Heart left ventricle (tissue), 16 donors: ENCODE measurements at regions of chr17 and their contacts with region 1.

Region 1: DNA sequence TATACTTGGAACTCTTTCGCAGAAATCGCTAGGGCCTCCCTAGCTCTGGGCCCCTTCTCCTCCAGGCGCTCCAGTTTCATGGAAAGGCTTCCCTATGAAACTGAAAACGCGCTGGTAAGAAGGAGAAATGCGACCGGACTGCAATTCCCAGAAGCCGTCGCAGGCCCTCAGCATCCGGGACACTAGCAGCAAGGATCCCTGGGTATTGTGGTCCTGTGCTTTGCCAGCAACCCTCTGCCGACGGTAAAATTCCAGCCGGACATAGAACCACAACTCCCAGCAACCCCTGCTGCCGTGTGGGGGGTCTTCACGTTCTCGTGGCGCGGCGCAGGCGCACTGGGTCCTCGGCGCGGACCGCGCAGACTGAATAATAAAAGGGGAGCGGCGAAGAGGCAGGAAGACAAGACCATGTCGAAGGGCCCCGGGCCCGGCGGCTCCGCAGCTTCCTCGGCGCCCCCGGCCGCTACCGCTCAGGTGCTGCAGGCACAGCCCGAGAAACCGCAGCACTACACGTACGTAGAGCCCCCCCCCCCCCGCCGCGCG is at the start of gene UNK:
- DNase-seq: peak; percentile 97 to 99 (median 98)
- ATAC-seq: peak; percentile 91 to 94 (median 93)
- H3K4me3 ChIP-seq: peak within 1 kb of the TSS; percentile 45 to 89 (median 75)
- H3K27ac ChIP-seq: peak within 1 kb of the TSS; percentile 94 to 100 (median 99)
- H3K4me1 ChIP-seq: peaks cover 4 to 56% (median 36%) of the 10 kb centered on the region in 12 donors
- H3K27me3 ChIP-seq: no peaks in the 10 kb centered on the region
- CTCF ChIP-seq: no peak
- POLR2A ChIP-seq: peak in 1 of 2 donors; percentile 59
- total RNA-seq, gene UNK: 11.3 to 27.5 (median 16.3) TPM

Region 2: GRCh38 chr17:75639771-75640316 is 144.7 kb before region 1 on chr17:
- intact Hi-C with region 1: no loop called
- DNase-seq: peak in 2 of 5 donors; percentile 7 to 25
- ATAC-seq: no peak
- H3K4me3 ChIP-seq: no peak overlapping the region
- H3K27ac ChIP-seq: peak overlapping the region in 5 of 12 donors; percentile 58 to 86 (median 70)
- H3K4me1 ChIP-seq: peaks cover 0 to 79% (median 23%) of the 10 kb centered on the region in 12 donors
- H3K27me3 ChIP-seq: no peaks in the 10 kb centered on the region
- CTCF ChIP-seq: no peak
- POLR2A ChIP-seq: no peak

Region 3: GRCh38 chr17:75737133-75737962 is 47.2 kb before region 1 on chr17:
- intact Hi-C with region 1: no loop called
- DNase-seq: no peak
- ATAC-seq: no peak
- H3K4me3 ChIP-seq: no peak overlapping the region
- H3K27ac ChIP-seq: no peak overlapping the region
- H3K4me1 ChIP-seq: peaks cover 0 to 9% (median 0%) of the 10 kb centered on the region in 12 donors
- H3K27me3 ChIP-seq: no peaks in the 10 kb centered on the region
- CTCF ChIP-seq: no peak
- POLR2A ChIP-seq: no peak

Region 4: DNA sequence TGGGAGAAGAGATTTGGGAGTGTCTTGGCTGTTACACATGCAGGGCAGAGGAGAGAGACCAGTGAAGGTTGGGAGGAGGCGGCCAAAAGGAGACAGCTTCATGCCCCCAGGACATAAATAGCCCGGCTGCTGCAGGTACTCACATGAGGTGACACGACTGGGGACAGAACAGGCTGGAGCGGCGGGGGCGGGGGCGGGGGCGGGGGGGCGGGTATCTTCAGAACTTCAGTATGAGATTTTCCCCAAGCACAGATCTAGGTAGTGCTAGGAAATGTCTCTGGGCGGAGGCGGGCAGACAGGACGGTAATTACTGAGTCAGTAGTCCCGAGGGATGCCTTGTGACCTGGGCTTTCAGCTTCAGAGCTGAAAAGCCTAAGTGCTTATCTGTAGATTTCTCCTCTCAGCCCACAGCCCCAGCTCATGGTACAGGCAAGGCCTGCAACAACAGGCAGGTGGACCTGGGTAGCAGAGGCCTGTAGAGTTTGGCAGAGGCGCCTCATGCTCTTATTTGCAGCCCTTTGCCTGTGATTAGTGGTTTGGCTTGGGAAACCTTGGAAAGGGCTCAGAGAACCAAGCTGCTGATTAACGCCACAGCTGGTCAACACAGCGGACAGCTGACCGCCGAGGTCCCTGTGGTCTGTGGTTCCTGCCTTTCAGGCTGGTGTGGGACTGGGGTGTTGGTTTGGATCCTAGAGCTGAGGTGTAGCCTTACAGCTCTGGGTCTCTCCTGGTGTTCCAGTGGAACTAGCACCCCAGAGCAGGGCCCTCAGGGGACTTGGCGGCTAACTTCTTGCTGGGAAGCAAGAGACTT is 24.6 kb after region 1 on chr17:
- intact Hi-C with region 1: loop called in 1 of 10 experiments (anchors 2 kb)
- DNase-seq: peak in 4 of 5 donors; percentile 74 to 85 (median 79)
- ATAC-seq: peak; percentile 60 to 86 (median 77)
- H3K4me3 ChIP-seq: peak overlapping the region in 5 of 12 donors; percentile 3 to 24 (median 6)
- H3K27ac ChIP-seq: peak overlapping the region; percentile 62 to 93 (median 84)
- H3K4me1 ChIP-seq: peaks cover 8 to 45% (median 32%) of the 10 kb centered on the region in 12 donors
- H3K27me3 ChIP-seq: no peaks in the 10 kb centered on the region
- CTCF ChIP-seq: no peak
- POLR2A ChIP-seq: no peak

Region 5: GRCh38 chr17:75827252-75828115 is 42.9 kb after region 1 on chr17:
- intact Hi-C with region 1: loop called in 3 of 10 experiments (anchors 2 to 5 kb)
- DNase-seq: peak; percentile 69 to 88 (median 79)
- ATAC-seq: peak; percentile 25 to 81 (median 67)
- H3K4me3 ChIP-seq: peak overlapping the region in 10 of 12 donors; percentile 27 to 56 (median 40)
- H3K27ac ChIP-seq: peak overlapping the region; percentile 70 to 90 (median 84)
- H3K4me1 ChIP-seq: peaks cover 5 to 37% (median 23%) of the 10 kb centered on the region in 12 donors
- H3K27me3 ChIP-seq: no peaks in the 10 kb centered on the region
- CTCF ChIP-seq: peak; percentile 59 to 83 (median 68)
- POLR2A ChIP-seq: no peak

Region 6: GRCh38 chr17:75872434-75873351 is 88.1 kb after region 1 on chr17:
- intact Hi-C with region 1: loop called in 5 of 10 experiments (anchors 2 to 10 kb)
- DNase-seq: peak; percentile 86 to 95 (median 90)
- ATAC-seq: peak; percentile 55 to 77 (median 66)
- H3K4me3 ChIP-seq: no peak overlapping the region
- H3K27ac ChIP-seq: peak overlapping the region; percentile 66 to 99 (median 92)
- H3K4me1 ChIP-seq: peaks cover 17 to 88% (median 59%) of the 10 kb centered on the region in 12 donors
- H3K27me3 ChIP-seq: no peaks in the 10 kb centered on the region
- CTCF ChIP-seq: no peak
- POLR2A ChIP-seq: peak in 1 of 2 donors; percentile 56

Region 7: GRCh38 chr17:75978938-75979704 is 194.6 kb after region 1 on chr17 and contains the starts of genes ACOX1 and TEN1:
- intact Hi-C with region 1: no loop called
- DNase-seq: peak; percentile 98 to 99 (median 99)
- ATAC-seq: peak; percentile 97 to 99 (median 98)
- H3K4me3 ChIP-seq: peak within 1 kb of the TSS; percentile 59 to 93 (median 79)
- H3K27ac ChIP-seq: peak within 1 kb of the TSS; percentile 92 to 100 (median 98)
- H3K4me1 ChIP-seq: peaks cover 0 to 64% (median 35%) of the 10 kb centered on the region in 12 donors
- H3K27me3 ChIP-seq: no peaks in the 10 kb centered on the region
- CTCF ChIP-seq: peak in 11 of 12 donors; percentile 8 to 64 (median 34)
- POLR2A ChIP-seq: peak; percentile 25 to 94
- total RNA-seq, gene ACOX1: 65.5 to 117 (median 84.8) TPM
- total RNA-seq, gene TEN1: 3.3 to 15.6 (median 8.6) TPM